ENCODE measurements at regions of chr1 and their contacts with region 1.

Region 1: DNA sequence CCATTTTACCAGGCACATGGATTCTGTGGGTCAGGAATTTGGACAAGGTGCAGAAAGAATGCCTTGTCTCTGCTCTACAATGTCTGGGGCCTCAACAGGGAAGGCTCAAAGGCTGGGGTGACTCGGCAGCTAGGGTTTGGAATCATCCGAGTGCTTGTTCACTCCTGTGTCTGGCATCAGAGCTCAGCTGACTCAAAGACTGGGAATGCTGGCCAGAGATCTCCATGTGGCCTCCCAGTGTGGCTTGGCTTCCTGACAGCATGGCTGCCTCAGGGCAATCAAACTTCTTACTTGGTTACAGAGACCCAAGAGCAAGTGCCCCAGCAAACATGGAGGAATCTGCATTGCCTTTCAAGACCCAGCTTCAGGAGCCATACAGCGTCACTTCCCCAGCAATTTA is 110.5 kb downstream of the TOMM20 start:
- DNase-seq: no peak
- H3K4me3 Mint-ChIP-seq: no peak overlapping the region
- H3K27ac Mint-ChIP-seq: peak overlapping the region; percentile 66
- H3K4me1 Mint-ChIP-seq: peaks cover 74% of the 10 kb centered on the region
- H3K27me3 Mint-ChIP-seq: no peaks in the 10 kb centered on the region

Region 2: GRCh38 chr1:234722904-234723720 is 295.0 kb before region 1 on chr1:
- CTCF ChIA-PET with region 1: no interaction called
- POLR2A ChIA-PET with region 1: no interaction called
- intact Hi-C with region 1: loop called (anchors 1 kb)
- DNase-seq: peak; percentile 91
- H3K4me3 Mint-ChIP-seq: peak overlapping the region; percentile 60
- H3K27ac Mint-ChIP-seq: peak overlapping the region; percentile 96
- H3K4me1 Mint-ChIP-seq: peaks cover 66% of the 10 kb centered on the region
- H3K27me3 Mint-ChIP-seq: no peaks in the 10 kb centered on the region

Region 3: GRCh38 chr1:234853906-234854644 is 164.1 kb before region 1 on chr1:
- CTCF ChIA-PET with region 1: no interaction called
- POLR2A ChIA-PET with region 1: no interaction called
- intact Hi-C with region 1: no loop called
- DNase-seq: no peak
- H3K4me3 Mint-ChIP-seq: no peak overlapping the region
- H3K27ac Mint-ChIP-seq: no peak overlapping the region
- H3K4me1 Mint-ChIP-seq: peaks cover 33% of the 10 kb centered on the region
- H3K27me3 Mint-ChIP-seq: no peaks in the 10 kb centered on the region

Region 4: GRCh38 chr1:234881893-234882771 is 136.0 kb before region 1 on chr1:
- CTCF ChIA-PET with region 1: no interaction called
- POLR2A ChIA-PET with region 1: no interaction called
- intact Hi-C with region 1: loop called (anchors 1 kb)
- DNase-seq: peak; percentile 72
- H3K4me3 Mint-ChIP-seq: no peak overlapping the region
- H3K27ac Mint-ChIP-seq: peak overlapping the region; percentile 59
- H3K4me1 Mint-ChIP-seq: peaks cover 40% of the 10 kb centered on the region
- H3K27me3 Mint-ChIP-seq: no peaks in the 10 kb centered on the region

Region 5: DNA sequence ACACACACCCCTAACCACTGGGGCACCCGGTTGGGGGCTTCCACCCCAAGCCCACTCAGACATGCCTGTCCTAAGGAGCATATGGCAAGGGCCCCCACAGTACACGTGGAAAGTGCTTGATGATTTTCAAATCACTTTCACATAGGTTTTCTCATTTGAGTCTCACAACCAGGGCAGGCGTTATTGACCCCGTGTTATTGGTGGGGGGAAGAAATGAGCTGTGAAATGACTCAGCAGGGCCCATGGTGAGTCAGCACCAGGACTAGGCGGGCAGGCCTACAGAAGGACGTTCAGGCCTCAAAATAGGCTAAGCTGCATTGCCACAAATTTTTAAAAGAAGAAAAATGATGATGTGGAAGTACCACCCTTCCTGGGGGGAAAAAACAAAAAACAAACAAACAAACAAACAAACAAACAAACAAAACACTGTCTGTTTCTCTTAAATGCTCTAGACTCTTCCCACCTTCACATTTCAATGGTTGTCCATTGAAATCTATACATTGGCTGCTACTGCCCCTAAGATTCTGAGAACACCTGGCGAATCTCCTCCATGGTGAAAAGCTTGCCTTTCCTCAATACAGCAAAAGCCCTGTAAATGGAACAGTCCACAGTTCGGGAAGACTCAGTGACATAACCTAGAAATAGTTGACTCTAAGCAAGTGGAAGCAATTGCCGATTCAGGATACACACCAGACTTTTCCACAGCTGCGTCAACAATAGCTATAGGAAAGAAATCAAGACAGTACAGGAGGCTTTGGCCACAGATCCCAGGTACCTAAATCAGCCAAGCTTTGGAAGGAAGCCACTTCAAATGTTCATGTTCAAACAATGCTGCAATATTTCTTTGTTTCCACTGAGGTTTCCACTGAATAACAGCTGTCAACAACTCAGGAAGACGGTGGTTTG is 124.2 kb before region 1 on chr1:
- CTCF ChIA-PET with region 1: no interaction called
- POLR2A ChIA-PET with region 1: no interaction called
- intact Hi-C with region 1: no loop called
- DNase-seq: peak; percentile 79
- H3K4me3 Mint-ChIP-seq: no peak overlapping the region
- H3K27ac Mint-ChIP-seq: no peak overlapping the region
- H3K4me1 Mint-ChIP-seq: peaks cover 16% of the 10 kb centered on the region
- H3K27me3 Mint-ChIP-seq: no peaks in the 10 kb centered on the region

Region 6: GRCh38 chr1:234978397-234979295 is 39.5 kb before region 1 on chr1:
- CTCF ChIA-PET with region 1: no interaction called
- POLR2A ChIA-PET with region 1: interaction called, 17 read pairs
- intact Hi-C with region 1: loop called (anchors 1 kb)
- DNase-seq: peak; percentile 86
- H3K4me3 Mint-ChIP-seq: peak overlapping the region; percentile 90
- H3K27ac Mint-ChIP-seq: peak overlapping the region; percentile 97
- H3K4me1 Mint-ChIP-seq: peaks cover 80% of the 10 kb centered on the region
- H3K27me3 Mint-ChIP-seq: no peaks in the 10 kb centered on the region

Region 7: DNA sequence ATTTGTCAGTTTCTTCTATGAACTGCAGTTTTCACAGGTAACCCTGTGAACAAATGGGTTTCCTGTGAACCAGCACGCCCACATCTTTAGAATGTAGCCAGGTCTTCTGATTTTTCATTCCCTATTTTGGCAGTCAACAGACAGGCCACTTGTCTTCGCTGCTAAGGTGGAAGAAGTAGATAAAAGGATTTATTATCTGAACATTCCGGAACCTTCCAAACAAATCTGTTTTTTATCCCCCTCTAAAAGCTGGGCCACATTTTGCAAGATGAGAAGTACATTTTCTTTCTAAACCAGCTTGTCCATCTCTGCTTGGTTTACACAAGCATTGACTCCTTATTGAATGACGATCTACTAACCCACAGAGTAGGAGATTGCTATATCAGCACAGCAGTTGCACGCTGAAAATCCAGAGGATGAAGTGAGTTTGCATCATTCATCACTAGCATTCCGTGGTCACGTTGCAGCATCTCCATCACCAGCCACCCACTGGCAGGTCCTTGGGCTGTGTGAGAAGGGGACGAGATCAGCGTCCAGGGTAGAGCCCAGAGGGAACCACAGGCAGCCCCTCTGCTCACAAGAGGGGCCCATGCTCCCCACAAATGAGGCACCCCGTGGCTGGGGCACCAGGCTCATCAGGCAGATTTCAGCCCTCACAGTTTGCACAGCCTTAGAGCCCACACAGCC is 27.0 kb after region 1 on chr1:
- CTCF ChIA-PET with region 1: interaction called, 5 read pairs
- POLR2A ChIA-PET with region 1: interaction called, 20 read pairs
- intact Hi-C with region 1: loop called (anchors 1 kb)
- DNase-seq: peak; percentile 70
- H3K4me3 Mint-ChIP-seq: no peak overlapping the region
- H3K27ac Mint-ChIP-seq: peak overlapping the region; percentile 91
- H3K4me1 Mint-ChIP-seq: peaks cover 59% of the 10 kb centered on the region
- H3K27me3 Mint-ChIP-seq: no peaks in the 10 kb centered on the region

Region 8: GRCh38 chr1:235050911-235051360 is 32.8 kb after region 1 on chr1:
- CTCF ChIA-PET with region 1: interaction called, 5 read pairs
- POLR2A ChIA-PET with region 1: interaction called, 20 read pairs
- intact Hi-C with region 1: loop called (anchors 1 kb)
- DNase-seq: peak; percentile 76
- H3K4me3 Mint-ChIP-seq: no peak overlapping the region
- H3K27ac Mint-ChIP-seq: peak overlapping the region; percentile 74
- H3K4me1 Mint-ChIP-seq: peaks cover 51% of the 10 kb centered on the region
- H3K27me3 Mint-ChIP-seq: no peaks in the 10 kb centered on the region